IMR-90 (cell line): ENCODE measurements at regions of chr12 and their contacts with region 1.

Region 1: DNA sequence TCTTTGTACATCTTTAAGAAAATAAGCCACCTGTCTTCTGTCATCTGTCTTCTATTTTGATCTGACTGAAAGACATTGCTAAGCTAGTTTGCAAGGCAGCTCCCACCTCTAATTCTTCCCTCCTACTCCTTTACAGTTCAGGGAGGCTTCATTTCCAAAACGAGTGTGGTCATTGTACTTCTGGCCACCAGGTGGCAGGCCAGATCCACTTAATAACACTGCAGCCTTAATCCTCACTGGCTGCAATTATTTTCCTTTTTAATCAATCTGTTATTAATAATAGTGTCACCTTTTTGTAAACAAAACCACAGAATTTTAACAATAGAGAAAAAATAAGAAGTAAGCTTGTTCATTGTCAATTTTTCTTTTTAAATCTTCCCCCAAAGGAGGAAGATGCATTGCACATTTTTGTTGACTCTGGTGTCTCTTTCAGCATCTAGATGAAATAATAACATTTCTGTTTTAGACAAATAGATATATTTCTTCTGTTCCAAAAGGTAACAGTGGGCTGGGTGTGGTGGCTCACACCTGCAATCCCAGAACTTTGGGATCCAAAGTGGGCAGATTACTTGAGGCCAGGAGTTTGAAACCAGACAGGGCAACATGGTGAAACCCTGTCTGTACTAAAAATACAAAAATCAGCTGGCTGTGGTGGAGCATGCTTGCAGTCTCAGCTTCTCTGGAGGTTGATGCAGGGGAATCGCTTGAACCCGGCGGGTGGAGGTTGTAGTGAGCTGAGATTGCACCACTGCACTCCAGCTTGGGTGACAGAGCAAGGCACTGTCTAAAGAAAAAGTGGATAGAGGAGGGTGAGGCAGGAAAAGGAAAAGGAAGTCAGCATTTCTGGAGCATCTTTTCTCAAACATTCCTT is 23.3 kb downstream of the GABARAPL1 start:
- DNase-seq: peak; percentile 44
- ATAC-seq: peak; percentile 87
- H3K4me3 ChIP-seq: no peak overlapping the region
- H3K27ac ChIP-seq: no peak overlapping the region
- H3K4me1 ChIP-seq: peaks cover 1% of the 10 kb centered on the region; the same call in 1 of the 2 replicates
- H3K27me3 ChIP-seq: no peaks in the 10 kb centered on the region; the same call in 1 of the 2 replicates
- CTCF ChIP-seq: peak; percentile 79
- POLR2A ChIP-seq: no peak
- RAD21 ChIP-seq: peak; percentile 84

Region 2: DNA sequence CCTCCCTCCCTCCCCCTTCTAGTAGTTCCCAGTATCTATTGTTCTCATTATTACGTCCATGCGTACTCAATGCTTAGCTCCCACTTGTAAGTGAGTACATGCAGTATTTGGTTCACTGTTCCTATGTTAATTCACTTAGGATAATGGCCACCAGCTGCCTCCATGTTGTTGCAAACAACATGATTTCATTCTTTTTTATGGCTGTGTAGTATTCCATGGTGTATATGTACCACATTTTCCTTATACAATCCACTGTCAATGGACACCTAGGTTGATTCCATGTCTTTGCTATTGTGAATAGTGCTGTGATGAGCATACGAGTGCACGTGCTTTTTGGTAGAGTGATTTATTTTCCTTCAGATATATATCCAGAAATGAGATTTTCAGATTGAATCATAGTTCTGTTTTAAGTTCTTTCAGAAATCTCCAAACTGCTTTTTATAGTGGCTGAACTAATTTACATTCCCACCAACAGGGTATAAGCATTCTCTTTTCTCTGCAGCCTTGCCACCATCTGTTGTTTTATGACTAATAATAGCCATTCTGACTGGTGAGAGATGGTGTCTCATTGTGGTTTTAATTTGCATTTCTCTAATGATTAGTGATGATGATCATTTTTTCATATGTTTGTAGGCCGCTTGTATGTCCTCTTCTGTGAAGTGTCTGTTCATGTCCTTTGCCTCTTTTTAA is 88.1 kb before region 1 on chr12:
- CTCF ChIA-PET with region 1: no interaction called
- POLR2A ChIA-PET with region 1: interaction called, 15 read pairs
- dilution Hi-C with region 1: no loop called
- in situ Hi-C with region 1: no loop called
- intact Hi-C with region 1: no loop called
- DNase-seq: no peak
- ATAC-seq: no peak
- H3K4me3 ChIP-seq: no peak overlapping the region
- H3K27ac ChIP-seq: no peak overlapping the region
- H3K4me1 ChIP-seq: peaks cover 2% of the 10 kb centered on the region; the same call in 1 of the 2 replicates
- H3K27me3 ChIP-seq: no peaks in the 10 kb centered on the region
- CTCF ChIP-seq: no peak
- POLR2A ChIP-seq: no peak
- RAD21 ChIP-seq: no peak

Region 3: GRCh38 chr12:10331642-10332239 is 95.7 kb after region 1 on chr12:
- CTCF ChIA-PET with region 1: no interaction called
- POLR2A ChIA-PET with region 1: no interaction called
- dilution Hi-C with region 1: no loop called
- in situ Hi-C with region 1: no loop called
- intact Hi-C with region 1: loop called (anchors 5 kb)
- DNase-seq: peak; percentile 62
- ATAC-seq: peak; percentile 94
- H3K4me3 ChIP-seq: no peak overlapping the region
- H3K27ac ChIP-seq: no peak overlapping the region
- H3K4me1 ChIP-seq: no peaks in the 10 kb centered on the region
- H3K27me3 ChIP-seq: peaks cover 4% of the 10 kb centered on the region
- CTCF ChIP-seq: peak; percentile 90
- POLR2A ChIP-seq: no peak
- RAD21 ChIP-seq: peak; percentile 87

Region 4: DNA sequence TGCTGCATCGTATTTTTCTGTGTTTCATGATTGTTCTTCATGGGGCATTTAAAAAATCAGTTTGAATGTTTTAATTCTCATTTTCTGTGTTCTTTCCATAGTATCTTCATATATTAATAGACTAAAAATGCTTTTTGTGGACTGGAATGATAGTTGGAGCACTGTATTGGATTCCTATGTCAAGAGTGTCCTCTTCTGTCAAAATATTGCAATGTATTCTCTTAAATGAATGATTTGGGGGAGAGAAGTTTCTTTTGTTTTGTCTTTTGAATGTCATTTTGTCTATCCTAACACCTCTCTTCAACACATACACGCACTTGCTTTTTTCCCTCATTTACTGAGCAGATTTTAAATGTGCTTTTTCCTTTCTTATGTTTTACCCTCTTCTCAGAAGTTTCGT is 265.0 kb after region 1 on chr12:
- CTCF ChIA-PET with region 1: no interaction called
- POLR2A ChIA-PET with region 1: no interaction called
- dilution Hi-C with region 1: no loop called
- in situ Hi-C with region 1: no loop called
- intact Hi-C with region 1: loop called (anchors 1 kb)
- DNase-seq: no peak
- ATAC-seq: no peak
- H3K4me3 ChIP-seq: no peak overlapping the region
- H3K27ac ChIP-seq: no peak overlapping the region
- H3K4me1 ChIP-seq: no peaks in the 10 kb centered on the region
- H3K27me3 ChIP-seq: peaks cover 6% of the 10 kb centered on the region
- CTCF ChIP-seq: peak; percentile 34
- POLR2A ChIP-seq: no peak
- RAD21 ChIP-seq: peak; percentile 35; the same call in 1 of the 2 replicates

Region 5: GRCh38 chr12:10749700-10750384 is 513.8 kb after region 1 on chr12:
- CTCF ChIA-PET with region 1: interaction called, 4 read pairs
- POLR2A ChIA-PET with region 1: no interaction called
- dilution Hi-C with region 1: no loop called
- in situ Hi-C with region 1: loop called (anchors 5 kb)
- intact Hi-C with region 1: loop called (anchors 1 kb)
- DNase-seq: peak; percentile 97
- ATAC-seq: peak; percentile 99
- H3K4me3 ChIP-seq: peak overlapping the region; percentile 40
- H3K27ac ChIP-seq: no peak overlapping the region
- H3K4me1 ChIP-seq: no peaks in the 10 kb centered on the region
- H3K27me3 ChIP-seq: peaks cover 10% of the 10 kb centered on the region
- CTCF ChIP-seq: peak; percentile 99
- POLR2A ChIP-seq: peak; percentile 59; the same call in 1 of the 2 replicates
- RAD21 ChIP-seq: peak; percentile 91